Colonic mucosa (tissue), 4 donors: ENCODE measurements at regions of chr16 and their contacts with region 1.

Region 1: GRCh38 chr16:89641458-89642119 is 15.9 kb downstream of the CHMP1A start:
- DNase-seq: no peak
- H3K4me3 ChIP-seq: no peak overlapping the region
- H3K27ac ChIP-seq: no peak overlapping the region
- H3K4me1 ChIP-seq: no peaks in the 10 kb centered on the region
- H3K27me3 ChIP-seq: no peaks in the 10 kb centered on the region
- CTCF ChIP-seq: no peak

Region 2: GRCh38 chr16:89574681-89575246 is 66.8 kb before region 1 on chr16:
- intact Hi-C with region 1: loop called (anchors 10 kb)
- DNase-seq: peak; percentile 57
- H3K4me3 ChIP-seq: peak overlapping the region; percentile 26
- H3K27ac ChIP-seq: no peak overlapping the region
- H3K4me1 ChIP-seq: peaks cover 11% of the 10 kb centered on the region
- H3K27me3 ChIP-seq: peaks cover 32% of the 10 kb centered on the region
- CTCF ChIP-seq: peak; percentile 59